K562 (cell line): ENCODE measurements at regions of chr5 and their contacts with region 1.

Region 1: DNA sequence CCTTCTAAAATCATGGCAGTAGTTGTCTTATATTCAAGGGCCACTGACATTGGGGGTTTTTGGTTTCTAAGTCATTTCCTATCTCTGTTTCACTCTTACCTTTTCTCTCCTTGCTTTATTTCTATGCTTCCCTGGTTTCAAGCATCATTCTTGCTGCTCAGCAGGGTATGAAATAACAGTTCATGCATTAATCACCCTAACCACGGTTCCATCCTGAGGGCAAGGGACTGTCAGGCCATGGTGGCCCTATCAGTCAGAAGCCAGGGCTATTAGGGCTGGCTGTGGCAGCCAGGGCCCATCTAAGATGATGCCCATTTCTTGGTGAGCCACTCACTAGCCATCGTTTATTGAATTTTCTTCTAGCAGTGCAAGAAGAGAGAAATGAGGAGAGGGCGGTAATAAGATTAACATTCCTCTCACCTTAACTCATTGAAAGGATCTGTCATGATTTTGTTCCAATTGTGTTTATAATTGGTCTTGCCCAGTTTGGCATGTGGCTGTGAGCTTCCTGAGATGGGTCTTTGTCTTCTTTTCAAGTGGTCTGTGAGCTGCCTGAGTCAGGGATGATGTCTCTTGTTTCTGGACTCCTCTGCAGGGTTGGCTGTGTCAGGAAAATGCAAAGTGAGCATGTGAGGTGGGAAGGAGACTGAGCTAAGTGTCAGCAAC is 45.2 kb downstream of the CYSTM1 start:
- DNase-seq: no peak
- ATAC-seq: no peak
- H3K4me3 ChIP-seq: no peak overlapping the region
- H3K27ac ChIP-seq: peak overlapping the region; percentile 76; the same call in 2 of the 3 replicates
- H3K4me1 ChIP-seq: peaks cover 39 to 88% of the 10 kb centered on the region in 2 experiments
- H3K27me3 ChIP-seq: no peaks in the 10 kb centered on the region
- CTCF ChIP-seq: no peak
- EP300 ChIP-seq: no peak
- POLR2A ChIP-seq: no peak
- RAD21 ChIP-seq: no peak

Region 2: DNA sequence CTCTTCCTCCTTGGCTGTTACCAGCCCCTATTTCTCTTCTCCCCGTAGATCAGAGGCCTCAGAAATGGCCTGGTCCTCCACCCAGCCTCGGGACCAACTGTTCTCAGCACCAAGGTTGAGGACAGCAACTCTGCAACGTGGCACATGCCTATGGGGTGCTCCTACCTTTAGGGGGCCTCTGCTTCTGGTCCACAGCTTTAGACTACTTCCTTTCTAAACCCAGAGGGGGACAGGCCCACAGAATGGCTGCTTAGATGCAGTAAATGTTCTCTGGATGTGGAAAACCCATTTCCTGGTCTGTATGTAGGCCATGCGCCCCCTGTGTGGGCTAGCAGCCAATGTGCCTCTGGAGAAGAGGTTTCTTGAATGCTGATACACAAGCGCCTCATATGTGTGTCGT is 245.5 kb before region 1 on chr5:
- CTCF ChIA-PET with region 1: no interaction called
- POLR2A ChIA-PET with region 1: no interaction called
- in situ Hi-C with region 1: no loop called
- intact Hi-C with region 1: no loop called
- DNase-seq: no peak
- ATAC-seq: peak; percentile 51; the same call in 2 of the 3 replicates
- H3K4me3 ChIP-seq: no peak overlapping the region
- H3K27ac ChIP-seq: no peak overlapping the region
- H3K4me1 ChIP-seq: no peaks in the 10 kb centered on the region
- H3K27me3 ChIP-seq: peaks cover 4 to 10% of the 10 kb centered on the region in 2 experiments; a peak in 3 of 5 replicates
- CTCF ChIP-seq: no peak
- EP300 ChIP-seq: no peak
- POLR2A ChIP-seq: no peak
- RAD21 ChIP-seq: no peak

Region 3: GRCh38 chr5:140207250-140207964 is 12.8 kb before region 1 on chr5:
- CTCF ChIA-PET with region 1: no interaction called
- POLR2A ChIA-PET with region 1: interaction called, 17 read pairs
- in situ Hi-C with region 1: no loop called
- intact Hi-C with region 1: no loop called
- DNase-seq: no peak
- ATAC-seq: no peak
- H3K4me3 ChIP-seq: no peak overlapping the region
- H3K27ac ChIP-seq: no peak overlapping the region
- H3K4me1 ChIP-seq: peaks cover 4% of the 10 kb centered on the region in 2 experiments; a peak in 3 of 5 replicates
- H3K27me3 ChIP-seq: no peaks in the 10 kb centered on the region
- CTCF ChIP-seq: no peak
- EP300 ChIP-seq: no peak
- POLR2A ChIP-seq: no peak
- RAD21 ChIP-seq: no peak